Dendritic cell treated with granulocyte-macrophage colony-stimulating factor and Interleukin-4, amounts not matched to agents 40 ng/mL and 50 ng/mL, for 4 days (primary cell): ENCODE measurements at regions of chr1 and their contacts with region 1.

Region 1: GRCh38 chr1:35715568-35716002 is 3.1 kb downstream of the C1orf216 start:
- H3K4me3 Mint-ChIP-seq: peak overlapping the region; percentile 64
- H3K27ac Mint-ChIP-seq: peak overlapping the region; percentile 43
- H3K4me1 Mint-ChIP-seq: peaks cover 49% of the 10 kb centered on the region
- H3K27me3 Mint-ChIP-seq: peaks cover 4% of the 10 kb centered on the region

Region 2: DNA sequence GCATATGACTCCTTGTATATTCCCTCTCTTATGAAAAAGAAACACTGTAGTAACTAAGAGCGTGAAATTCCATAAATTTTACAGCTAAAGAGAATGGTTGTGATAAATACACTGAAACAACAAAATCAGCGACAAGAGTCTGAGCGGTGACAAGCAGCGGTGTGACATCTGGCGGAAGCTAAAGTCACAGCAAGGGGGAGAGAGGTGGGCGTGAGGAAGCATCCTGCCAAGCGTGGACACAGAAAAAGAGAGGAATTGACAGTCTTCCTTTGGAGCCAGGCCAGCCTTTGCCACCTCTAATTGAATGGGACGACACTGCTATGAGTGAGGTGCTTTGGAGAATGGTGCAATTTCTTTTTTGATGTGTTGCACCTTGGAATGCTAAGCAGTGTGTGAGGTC is 100.1 kb before region 1 on chr1:
- intact Hi-C with region 1: no loop called
- H3K4me3 Mint-ChIP-seq: no peak overlapping the region
- H3K27ac Mint-ChIP-seq: no peak overlapping the region
- H3K4me1 Mint-ChIP-seq: no peaks in the 10 kb centered on the region
- H3K27me3 Mint-ChIP-seq: no peaks in the 10 kb centered on the region

Region 3: GRCh38 chr1:35641233-35641866 is 74.2 kb before region 1 on chr1 and contains the start of gene PSMB2:
- intact Hi-C with region 1: loop called (anchors 1 kb)
- H3K4me3 Mint-ChIP-seq: peak within 1 kb of the TSS; percentile 90
- H3K27ac Mint-ChIP-seq: peak within 1 kb of the TSS; percentile 95
- H3K4me1 Mint-ChIP-seq: peaks cover 23% of the 10 kb centered on the region
- H3K27me3 Mint-ChIP-seq: peaks cover 12% of the 10 kb centered on the region